ENCODE measurements at regions of chr3 and their contacts with region 1.

Region 1: GRCh38 chr3:15241341-15241740 is 35.3 kb downstream of the CAPN7 start:
- DNase-seq: peak; percentile 44
- ATAC-seq: no peak

Region 2: GRCh38 chr3:15585111-15585845 is 343.9 kb after region 1 on chr3:
- intact Hi-C with region 1: loop called (anchors 10 kb)
- DNase-seq: no peak
- ATAC-seq: no peak

Measured in Right ventricle myocardium superior (tissue), 1 donor.